ENCODE measurements at regions of chr11 and their contacts with region 1.

Region 1: GRCh38 chr11:58011771-58012170 is 11.9 kb upstream of the OR9Q1 start:
- DNase-seq: no peak
- ATAC-seq: no peak
- H3K4me3 ChIP-seq: no peak overlapping the region
- H3K4me3 Mint-ChIP-seq: no peak overlapping the region
- H3K27ac ChIP-seq: no peak overlapping the region
- H3K27ac Mint-ChIP-seq: no peak overlapping the region
- H3K4me1 ChIP-seq: no peaks in the 10 kb centered on the region
- H3K4me1 Mint-ChIP-seq: no peaks in the 10 kb centered on the region
- H3K27me3 ChIP-seq: peaks cover 0 to 6% of the 10 kb centered on the region in 2 donors
- H3K27me3 Mint-ChIP-seq: peaks cover 0 to 18% (median 12%) of the 10 kb centered on the region in 5 donors

Region 2: DNA sequence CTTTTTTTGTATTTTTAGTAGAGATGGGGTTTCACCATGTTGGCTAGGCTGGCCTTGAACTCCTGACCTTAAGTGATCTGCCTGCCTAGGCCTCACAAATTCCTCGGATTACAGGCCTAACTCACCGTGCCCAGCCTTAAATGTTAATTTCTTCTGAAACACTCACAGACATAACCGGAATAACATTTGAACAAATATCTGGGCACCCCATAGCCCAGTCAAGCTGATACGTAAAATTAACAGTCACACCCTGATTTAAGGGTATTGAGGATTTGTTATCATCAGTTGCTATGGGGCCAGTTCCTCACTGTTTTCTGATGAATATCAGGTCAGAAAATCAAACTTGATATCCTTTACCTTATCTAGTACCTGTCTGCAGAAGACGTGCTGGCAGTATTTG is 11.1 kb before region 1 on chr11:
- CTCF ChIA-PET with region 1: no interaction called
- POLR2A ChIA-PET with region 1: no interaction called
- intact Hi-C with region 1: loop called in 1 of 2 experiments (anchors 1 kb)
- DNase-seq: no peak
- ATAC-seq: no peak
- H3K4me3 ChIP-seq: no peak overlapping the region
- H3K4me3 Mint-ChIP-seq: no peak overlapping the region
- H3K27ac ChIP-seq: no peak overlapping the region
- H3K27ac Mint-ChIP-seq: no peak overlapping the region
- H3K4me1 ChIP-seq: no peaks in the 10 kb centered on the region
- H3K4me1 Mint-ChIP-seq: peaks cover 1 to 6% (median 4%) of the 10 kb centered on the region in 7 donors
- H3K27me3 ChIP-seq: no peaks in the 10 kb centered on the region
- H3K27me3 Mint-ChIP-seq: peaks cover 0 to 30% (median 23%) of the 10 kb centered on the region in 5 donors

Region 3: GRCh38 chr11:58024601-58025091 is 12.9 kb after region 1 on chr11:
- CTCF ChIA-PET with region 1: no interaction called
- POLR2A ChIA-PET with region 1: no interaction called
- intact Hi-C with region 1: no loop called
- DNase-seq: no peak
- ATAC-seq: no peak
- H3K4me3 ChIP-seq: no peak overlapping the region
- H3K4me3 Mint-ChIP-seq: no peak overlapping the region
- H3K27ac ChIP-seq: no peak overlapping the region
- H3K27ac Mint-ChIP-seq: no peak overlapping the region
- H3K4me1 ChIP-seq: no peaks in the 10 kb centered on the region
- H3K4me1 Mint-ChIP-seq: no peaks in the 10 kb centered on the region
- H3K27me3 ChIP-seq: no peaks in the 10 kb centered on the region
- H3K27me3 Mint-ChIP-seq: peaks cover 0 to 13% (median 6%) of the 10 kb centered on the region in 5 donors